Aorta (tissue), 5 donors: ENCODE measurements at regions of chr4 and their contacts with region 1.

Region 1: GRCh38 chr4:89894649-89895550 is at the start of gene MMRN1:
- DNase-seq: no peak
- ATAC-seq: peak; percentile 57
- H3K4me3 ChIP-seq: no peak within 1 kb of the TSS
- H3K27ac ChIP-seq: no peak within 1 kb of the TSS
- H3K4me1 ChIP-seq: no peaks in the 10 kb centered on the region
- H3K27me3 ChIP-seq: peaks cover 0 to 1% of the 10 kb centered on the region in 2 donors
- total RNA-seq, gene MMRN1: 24.5 to 87.0 TPM

Region 2: DNA sequence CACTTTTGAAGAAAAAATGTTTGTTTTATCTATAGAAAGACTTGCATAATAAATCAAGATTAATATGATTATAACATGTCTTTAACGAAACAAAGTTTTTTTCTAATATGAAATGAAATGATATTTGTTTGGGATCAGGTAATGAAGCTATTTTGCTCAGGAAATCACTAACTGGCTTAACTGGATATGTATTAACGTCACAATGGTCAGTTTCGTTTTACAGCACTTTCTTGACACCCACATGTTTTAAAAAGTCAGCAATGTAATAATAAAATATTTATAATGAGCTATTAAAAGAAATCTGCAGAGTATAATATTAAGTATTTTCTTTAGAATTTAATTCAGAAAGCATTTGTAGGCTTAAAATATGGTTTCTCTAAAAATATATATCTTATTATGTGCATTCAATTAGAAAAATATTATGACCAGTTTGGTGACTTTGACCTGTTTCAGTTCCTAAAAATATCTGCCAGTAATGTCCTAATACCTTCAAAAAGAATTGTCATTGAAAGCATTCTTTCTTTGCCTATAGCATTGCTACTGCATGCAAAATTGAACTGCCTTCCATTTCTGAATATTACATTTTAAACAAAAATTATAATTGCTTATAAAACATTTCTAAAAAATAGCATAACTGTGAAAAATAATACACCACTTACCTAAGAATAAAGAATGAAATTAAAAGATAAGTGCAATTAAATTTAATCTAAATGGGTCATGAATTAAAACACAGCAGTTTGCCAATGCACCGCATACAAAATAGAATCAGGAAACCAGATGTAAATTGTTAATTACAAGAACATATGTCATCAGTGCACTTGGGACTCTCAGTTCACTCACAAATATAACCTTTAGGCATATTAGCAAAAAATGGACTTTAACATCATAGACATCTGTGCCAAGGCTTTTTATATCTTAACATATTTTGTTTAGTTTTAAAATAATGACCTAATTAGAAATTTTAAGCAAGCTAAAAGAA is 751.9 kb before region 1 on chr4:
- intact Hi-C with region 1: no loop called
- DNase-seq: no peak
- ATAC-seq: no peak
- H3K4me3 ChIP-seq: no peak overlapping the region
- H3K27ac ChIP-seq: no peak overlapping the region
- H3K4me1 ChIP-seq: no peaks in the 10 kb centered on the region
- H3K27me3 ChIP-seq: no peaks in the 10 kb centered on the region

Region 3: DNA sequence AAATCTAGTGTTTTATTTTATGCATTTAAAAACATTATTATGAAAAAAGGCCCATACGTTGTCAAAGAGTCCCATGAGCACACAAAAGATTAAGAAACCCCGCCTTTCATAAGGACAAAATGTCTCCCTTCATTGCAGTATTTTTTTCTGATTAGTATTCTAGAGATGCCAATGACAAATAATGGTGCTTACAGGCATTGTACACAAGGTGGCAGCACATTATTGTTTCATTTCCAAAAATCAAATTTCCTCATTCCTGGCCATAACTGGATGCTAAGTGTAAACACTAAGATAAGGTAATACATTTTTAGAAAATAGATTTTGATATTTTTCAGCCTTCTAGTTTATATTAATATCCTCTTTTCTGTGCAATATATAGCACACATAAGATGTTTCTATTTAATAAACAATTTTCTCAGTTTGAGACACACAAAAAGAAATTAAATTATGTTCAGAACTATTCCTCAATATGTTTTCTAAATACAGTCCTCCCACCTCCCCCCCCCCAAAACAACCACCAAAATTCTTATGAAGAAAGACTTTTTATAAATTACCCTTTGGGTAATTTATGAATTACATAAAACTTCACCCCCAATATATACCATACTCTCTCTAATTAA is 735.9 kb before region 1 on chr4:
- intact Hi-C with region 1: loop called in 1 of 2 experiments (anchors 5 kb)
- DNase-seq: no peak
- ATAC-seq: peak; percentile 67
- H3K4me3 ChIP-seq: no peak overlapping the region
- H3K27ac ChIP-seq: no peak overlapping the region
- H3K4me1 ChIP-seq: no peaks in the 10 kb centered on the region
- H3K27me3 ChIP-seq: no peaks in the 10 kb centered on the region

Region 4: DNA sequence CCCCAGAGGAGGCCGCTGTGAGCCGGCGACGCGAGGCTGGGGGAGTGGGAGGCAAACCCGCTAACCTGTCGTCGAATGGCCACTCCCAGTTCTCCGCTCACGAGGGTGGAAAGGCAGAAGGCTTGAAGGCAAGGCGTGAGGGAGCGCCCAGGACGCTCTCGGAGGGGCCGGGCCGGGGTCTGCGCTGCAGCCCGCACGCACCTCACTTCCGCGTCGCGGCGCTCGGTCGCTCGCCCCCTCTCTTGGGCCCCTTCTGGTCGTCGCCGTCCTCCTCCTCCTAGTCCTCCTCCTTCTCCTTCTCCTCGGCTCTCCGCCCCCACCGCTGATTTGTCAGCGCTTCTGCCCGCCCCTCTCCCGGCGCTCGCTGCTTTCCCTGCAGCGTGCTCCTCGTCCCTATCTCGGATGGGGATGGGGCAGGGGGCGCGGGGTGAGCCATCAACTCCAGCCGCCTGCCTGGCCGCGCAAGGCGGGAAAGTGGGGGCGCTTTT is 58.0 kb before region 1 on chr4 and contains the start of gene SNCA:
- intact Hi-C with region 1: no loop called
- DNase-seq: peak; percentile 73 to 84
- ATAC-seq: peak; percentile 70
- H3K4me3 ChIP-seq: peak within 1 kb of the TSS; percentile 29 to 32
- H3K27ac ChIP-seq: no peak within 1 kb of the TSS
- H3K4me1 ChIP-seq: peaks cover 0 to 2% of the 10 kb centered on the region in 2 donors
- H3K27me3 ChIP-seq: peaks cover 0 to 3% of the 10 kb centered on the region in 2 donors
- total RNA-seq, gene SNCA: 11.2 to 12.6 TPM

Region 5: GRCh38 chr4:89994176-89994873 is 99.4 kb after region 1 on chr4:
- intact Hi-C with region 1: no loop called
- DNase-seq: no peak
- ATAC-seq: no peak
- H3K4me3 ChIP-seq: no peak overlapping the region
- H3K27ac ChIP-seq: no peak overlapping the region
- H3K4me1 ChIP-seq: no peaks in the 10 kb centered on the region
- H3K27me3 ChIP-seq: no peaks in the 10 kb centered on the region